CD4-positive, alpha-beta memory T cell (primary cell): ENCODE measurements at regions of chr17 and their contacts with region 1.

Region 1: DNA sequence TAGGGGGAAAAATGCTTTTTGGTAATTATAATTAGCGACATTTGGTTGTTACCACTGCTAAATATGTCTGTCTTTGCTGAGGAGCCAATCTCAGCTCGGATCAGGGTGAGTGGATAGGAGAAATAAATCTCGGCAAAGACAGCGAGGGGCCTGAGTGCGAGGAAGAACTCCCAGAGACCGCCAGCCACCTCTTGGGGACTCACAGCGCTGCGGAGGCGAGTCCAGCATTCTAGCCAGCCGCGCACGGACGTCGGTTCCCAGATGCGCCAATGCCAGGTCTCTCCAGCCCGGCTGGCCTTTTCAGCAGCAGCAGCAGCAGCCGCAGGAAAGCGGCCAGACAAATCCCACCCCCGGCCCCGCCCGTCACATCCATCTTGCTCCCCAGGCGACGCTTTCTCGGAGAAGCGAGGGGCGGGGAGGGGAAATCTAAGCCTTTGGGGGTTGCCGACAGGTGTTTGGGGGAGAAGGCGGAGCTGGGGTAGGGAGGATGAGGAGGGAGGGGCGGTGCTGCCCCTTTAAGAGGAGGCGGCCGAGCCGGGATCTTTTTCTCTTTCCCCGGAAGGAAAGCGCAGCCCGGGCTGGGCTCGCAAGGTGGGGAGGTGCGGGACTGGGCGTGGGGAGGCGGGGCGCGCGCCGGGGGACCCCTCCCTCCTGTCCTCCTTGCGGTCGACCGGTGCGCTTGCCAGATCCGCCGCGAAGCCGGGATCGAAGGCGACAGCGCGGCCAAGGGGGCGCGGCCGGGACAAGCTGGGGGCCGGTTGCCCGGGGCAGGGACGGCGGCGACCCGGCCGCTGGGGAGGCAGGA is at the start of gene ITGA3:
- DNase-seq: peak; percentile 46 to 77 (median 49)
- H3K4me3 ChIP-seq: peak within 1 kb of the TSS; percentile 74 to 87
- H3K4me3 Mint-ChIP-seq: peak within 1 kb of the TSS; percentile 91 to 99 (median 94)
- H3K27ac ChIP-seq: peak within 1 kb of the TSS; percentile 60
- H3K27ac Mint-ChIP-seq: peak within 1 kb of the TSS; percentile 85 to 93 (median 88)
- H3K4me1 ChIP-seq: peaks cover 12% of the 10 kb centered on the region
- H3K4me1 Mint-ChIP-seq: peaks cover 13 to 50% (median 27%) of the 10 kb centered on the region in 4 donors
- H3K27me3 ChIP-seq: no peaks in the 10 kb centered on the region
- H3K27me3 Mint-ChIP-seq: no peaks in the 10 kb centered on the region
- total RNA-seq, gene ITGA3: 13.9 to 16.3 TPM

Region 2: GRCh38 chr17:50026901-50027630 is 28.6 kb before region 1 on chr17:
- CTCF ChIA-PET with region 1: interaction called, 12 read pairs
- POLR2A ChIA-PET with region 1: no interaction called
- intact Hi-C with region 1: loop called (anchors 1 kb)
- DNase-seq: peak; percentile 69 to 75 (median 71)
- H3K4me3 ChIP-seq: no peak overlapping the region
- H3K4me3 Mint-ChIP-seq: peak overlapping the region in 3 of 8 donors; percentile 17 to 56 (median 39)
- H3K27ac ChIP-seq: no peak overlapping the region
- H3K27ac Mint-ChIP-seq: no peak overlapping the region
- H3K4me1 ChIP-seq: peaks cover 8% of the 10 kb centered on the region
- H3K4me1 Mint-ChIP-seq: peaks cover 2 to 21% (median 9%) of the 10 kb centered on the region in 4 donors
- H3K27me3 ChIP-seq: no peaks in the 10 kb centered on the region
- H3K27me3 Mint-ChIP-seq: peaks cover 19 to 22% of the 10 kb centered on the region in 2 donors

Region 3: GRCh38 chr17:50177983-50178834 is 122.6 kb after region 1 on chr17:
- CTCF ChIA-PET with region 1: no interaction called
- POLR2A ChIA-PET with region 1: no interaction called
- intact Hi-C with region 1: no loop called
- DNase-seq: peak; percentile 27 to 73 (median 37)
- H3K4me3 ChIP-seq: no peak overlapping the region
- H3K4me3 Mint-ChIP-seq: peak overlapping the region in 7 of 8 donors; percentile 43 to 79 (median 61)
- H3K27ac ChIP-seq: no peak overlapping the region
- H3K27ac Mint-ChIP-seq: peak overlapping the region in 4 of 7 donors; percentile 17 to 80 (median 30)
- H3K4me1 ChIP-seq: peaks cover 4% of the 10 kb centered on the region
- H3K4me1 Mint-ChIP-seq: peaks cover 6 to 20% (median 9%) of the 10 kb centered on the region in 4 donors
- H3K27me3 ChIP-seq: no peaks in the 10 kb centered on the region
- H3K27me3 Mint-ChIP-seq: no peaks in the 10 kb centered on the region

Region 4: DNA sequence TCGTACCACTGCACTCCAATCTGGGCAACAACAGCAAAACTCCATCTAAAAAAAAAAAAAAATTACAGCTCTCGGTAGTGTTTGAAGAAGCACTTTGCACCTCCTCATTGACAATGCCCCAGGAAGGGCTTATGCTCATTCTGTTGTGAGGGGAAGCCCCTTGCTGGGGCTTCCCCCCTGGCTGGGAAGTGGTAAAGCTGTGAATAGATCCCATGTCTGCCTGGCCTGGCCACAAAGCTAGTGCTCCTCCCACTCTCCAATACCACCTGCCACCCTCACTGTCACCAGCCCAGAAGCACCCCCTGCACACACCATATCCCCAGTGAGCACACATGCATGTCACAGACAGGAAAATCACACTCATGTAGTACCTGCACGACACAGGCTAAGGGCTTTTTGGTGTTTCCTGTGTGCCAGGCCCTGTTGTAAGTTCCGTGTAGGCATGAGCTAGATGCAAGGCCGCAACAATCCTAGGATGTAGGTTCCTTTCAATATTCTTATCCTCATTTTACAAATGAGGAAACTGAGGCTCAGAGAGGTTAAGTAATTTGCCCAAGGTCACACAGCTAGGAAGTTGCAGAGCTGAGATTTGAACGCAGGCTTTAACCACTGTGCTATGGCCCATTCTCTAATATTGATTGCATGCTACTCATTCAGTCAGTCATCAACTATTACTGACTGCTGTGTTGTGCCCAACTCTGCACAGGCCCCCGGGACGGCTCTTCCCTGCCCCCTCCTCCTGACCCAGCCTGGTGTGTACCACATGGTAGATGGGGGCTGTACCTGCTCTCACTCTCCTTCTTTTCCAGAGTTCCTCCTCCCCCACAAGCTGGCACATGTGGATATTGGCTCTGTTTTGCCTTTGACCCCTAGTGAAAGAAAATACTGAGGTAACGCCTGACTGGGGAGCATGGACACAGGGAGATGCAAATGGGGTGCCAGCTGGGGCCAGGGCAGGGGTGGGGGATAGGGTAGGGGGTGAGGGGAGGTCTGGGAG is 157.7 kb after region 1 on chr17:
- CTCF ChIA-PET with region 1: no interaction called
- POLR2A ChIA-PET with region 1: no interaction called
- intact Hi-C with region 1: no loop called
- DNase-seq: peak; percentile 17 to 92 (median 35)
- H3K4me3 ChIP-seq: no peak overlapping the region
- H3K4me3 Mint-ChIP-seq: peak overlapping the region in 1 of 8 donors; percentile 3
- H3K27ac ChIP-seq: no peak overlapping the region
- H3K27ac Mint-ChIP-seq: peak overlapping the region in 3 of 7 donors; percentile 5 to 29 (median 22)
- H3K4me1 ChIP-seq: peaks cover 6% of the 10 kb centered on the region
- H3K4me1 Mint-ChIP-seq: peaks cover 0 to 22% (median 3%) of the 10 kb centered on the region in 4 donors
- H3K27me3 ChIP-seq: no peaks in the 10 kb centered on the region
- H3K27me3 Mint-ChIP-seq: peaks cover 13 to 25% of the 10 kb centered on the region in 2 donors